ENCODE measurements at regions of chr4 and their contacts with region 1.

Region 1: DNA sequence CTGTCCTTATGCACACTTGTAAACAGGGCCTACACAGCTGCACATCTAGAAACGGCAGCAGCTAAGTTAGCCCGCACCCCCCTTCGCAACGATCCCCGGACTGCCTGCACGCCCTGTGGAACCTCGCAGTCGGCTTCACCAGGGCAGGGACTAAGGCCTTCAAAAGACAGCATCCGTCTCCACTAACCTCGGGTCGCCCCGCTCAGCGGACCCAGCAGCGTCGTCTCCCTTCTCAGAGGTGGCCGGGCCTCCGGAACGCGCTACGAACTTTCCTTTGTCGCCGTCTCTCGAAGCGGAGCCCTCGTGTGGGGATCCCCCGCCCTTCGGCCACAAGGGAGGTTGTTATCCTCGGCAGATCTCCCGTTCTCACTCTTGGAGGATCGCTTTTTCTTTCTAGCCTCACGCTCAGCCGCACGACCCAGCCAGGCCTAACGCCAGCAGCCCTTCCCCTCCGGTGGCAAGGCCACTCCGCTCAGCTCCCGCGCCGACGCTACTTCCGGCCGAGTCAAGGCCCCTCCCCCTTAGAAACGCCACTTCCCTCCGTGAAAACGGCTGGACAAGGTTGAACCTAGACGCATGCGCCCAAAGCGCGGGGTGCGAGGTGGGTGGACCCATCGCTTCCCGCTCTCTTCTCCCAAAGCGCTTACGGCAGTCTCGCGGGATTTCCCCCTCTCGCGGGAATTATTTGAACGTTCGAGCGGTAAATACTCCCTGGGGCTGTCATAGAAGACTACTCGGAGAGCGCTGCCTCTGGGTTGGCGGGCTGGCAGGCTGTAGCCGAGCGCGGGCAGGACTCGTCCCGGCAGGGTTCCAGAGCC is at the starts of genes DCAF16 and NCAPG:
- DNase-seq: peak; percentile 99
- ATAC-seq: peak; percentile 92
- H3K4me3 ChIP-seq: peak within 1 kb of the TSS; percentile 82
- H3K27ac ChIP-seq: peak within 1 kb of the TSS; percentile 86
- H3K4me1 ChIP-seq: peaks cover 2% of the 10 kb centered on the region; the same call in 1 of the 2 replicates
- H3K27me3 ChIP-seq: no peaks in the 10 kb centered on the region
- CTCF ChIP-seq: no peak
- POLR2A ChIP-seq: peak; percentile 97
- RAD21 ChIP-seq: no peak
- total RNA-seq, gene DCAF16: 23.6 and 31.5 TPM in 2 replicates
- total RNA-seq, gene NCAPG: 26.7 and 41.7 TPM in 2 replicates

Region 2: GRCh38 chr4:17544205-17544604 is 266.3 kb before region 1 on chr4:
- CTCF ChIA-PET with region 1: interaction called, 7 read pairs
- POLR2A ChIA-PET with region 1: interaction called, 3 read pairs
- dilution Hi-C with region 1: no loop called
- in situ Hi-C with region 1: no loop called
- intact Hi-C with region 1: loop called (anchors 1 kb)
- DNase-seq: no peak
- ATAC-seq: no peak; the same call in 1 of the 2 replicates
- H3K4me3 ChIP-seq: no peak overlapping the region
- H3K27ac ChIP-seq: no peak overlapping the region
- H3K4me1 ChIP-seq: peaks cover 1% of the 10 kb centered on the region; the same call in 1 of the 2 replicates
- H3K27me3 ChIP-seq: no peaks in the 10 kb centered on the region; the same call in 1 of the 2 replicates
- CTCF ChIP-seq: no peak
- POLR2A ChIP-seq: no peak
- RAD21 ChIP-seq: no peak

Region 3: GRCh38 chr4:17576932-17577665 is 233.4 kb before region 1 on chr4 and contains the start of gene LAP3:
- CTCF ChIA-PET with region 1: no interaction called
- POLR2A ChIA-PET with region 1: no interaction called
- dilution Hi-C with region 1: no loop called
- in situ Hi-C with region 1: loop called (anchors 25 kb)
- intact Hi-C with region 1: no loop called
- DNase-seq: peak; percentile 96
- ATAC-seq: peak; percentile 97
- H3K4me3 ChIP-seq: peak within 1 kb of the TSS; percentile 65
- H3K27ac ChIP-seq: peak within 1 kb of the TSS; percentile 62
- H3K4me1 ChIP-seq: peaks cover 6% of the 10 kb centered on the region; the same call in 1 of the 2 replicates
- H3K27me3 ChIP-seq: no peaks in the 10 kb centered on the region
- CTCF ChIP-seq: 0 out of 2 replicates have a peak, but pooled peaks have one; percentile 1
- POLR2A ChIP-seq: peak; percentile 95
- RAD21 ChIP-seq: no peak
- total RNA-seq, gene LAP3: 91.6 and 93.0 TPM in 2 replicates

Region 4: GRCh38 chr4:17636696-17637622 is 173.5 kb before region 1 on chr4:
- CTCF ChIA-PET with region 1: no interaction called
- POLR2A ChIA-PET with region 1: no interaction called
- dilution Hi-C with region 1: no loop called
- in situ Hi-C with region 1: no loop called
- intact Hi-C with region 1: loop called (anchors 5 kb)
- DNase-seq: peak; percentile 69
- ATAC-seq: peak; percentile 96
- H3K4me3 ChIP-seq: no peak overlapping the region
- H3K27ac ChIP-seq: no peak overlapping the region
- H3K4me1 ChIP-seq: no peaks in the 10 kb centered on the region
- H3K27me3 ChIP-seq: no peaks in the 10 kb centered on the region
- CTCF ChIP-seq: peak; percentile 86
- POLR2A ChIP-seq: no peak
- RAD21 ChIP-seq: peak; percentile 79

Region 5: GRCh38 chr4:17934286-17934685 is 123.8 kb after region 1 on chr4:
- CTCF ChIA-PET with region 1: no interaction called
- POLR2A ChIA-PET with region 1: no interaction called
- dilution Hi-C with region 1: no loop called
- in situ Hi-C with region 1: no loop called
- intact Hi-C with region 1: loop called (anchors 10 kb)
- DNase-seq: peak; percentile 14
- ATAC-seq: no peak
- H3K4me3 ChIP-seq: no peak overlapping the region
- H3K27ac ChIP-seq: no peak overlapping the region
- H3K4me1 ChIP-seq: no peaks in the 10 kb centered on the region
- H3K27me3 ChIP-seq: no peaks in the 10 kb centered on the region
- CTCF ChIP-seq: peak; percentile 52
- POLR2A ChIP-seq: no peak
- RAD21 ChIP-seq: peak; percentile 54

Region 6: DNA sequence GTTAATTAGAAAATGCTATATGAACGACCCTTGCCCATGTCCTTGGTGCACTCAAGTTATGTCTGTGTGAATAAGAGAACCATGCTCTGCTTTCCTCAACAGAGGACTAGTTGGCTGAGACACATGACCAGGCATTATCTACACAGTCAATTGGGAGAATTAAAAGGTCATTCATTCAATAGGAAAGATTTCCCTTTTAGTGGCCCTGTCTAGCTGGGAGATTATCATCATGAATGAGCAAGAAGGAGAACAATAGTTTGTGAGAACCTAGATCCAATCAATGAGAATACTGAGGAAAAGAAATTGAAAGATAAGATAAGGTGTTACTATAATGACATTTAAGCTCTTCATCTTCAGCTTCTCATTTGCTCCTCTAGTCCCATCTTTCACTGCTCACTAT is 1244.4 kb after region 1 on chr4:
- CTCF ChIA-PET with region 1: no interaction called
- POLR2A ChIA-PET with region 1: no interaction called
- dilution Hi-C with region 1: no loop called
- in situ Hi-C with region 1: no loop called
- intact Hi-C with region 1: no loop called
- DNase-seq: no peak
- ATAC-seq: no peak
- H3K4me3 ChIP-seq: no peak overlapping the region
- H3K27ac ChIP-seq: no peak overlapping the region
- H3K4me1 ChIP-seq: no peaks in the 10 kb centered on the region
- H3K27me3 ChIP-seq: no peaks in the 10 kb centered on the region
- CTCF ChIP-seq: no peak
- POLR2A ChIP-seq: no peak
- RAD21 ChIP-seq: no peak